Esophagus muscularis mucosa (tissue), 4 donors: ENCODE measurements at regions of chr11 and their contacts with region 1.

Region 1: DNA sequence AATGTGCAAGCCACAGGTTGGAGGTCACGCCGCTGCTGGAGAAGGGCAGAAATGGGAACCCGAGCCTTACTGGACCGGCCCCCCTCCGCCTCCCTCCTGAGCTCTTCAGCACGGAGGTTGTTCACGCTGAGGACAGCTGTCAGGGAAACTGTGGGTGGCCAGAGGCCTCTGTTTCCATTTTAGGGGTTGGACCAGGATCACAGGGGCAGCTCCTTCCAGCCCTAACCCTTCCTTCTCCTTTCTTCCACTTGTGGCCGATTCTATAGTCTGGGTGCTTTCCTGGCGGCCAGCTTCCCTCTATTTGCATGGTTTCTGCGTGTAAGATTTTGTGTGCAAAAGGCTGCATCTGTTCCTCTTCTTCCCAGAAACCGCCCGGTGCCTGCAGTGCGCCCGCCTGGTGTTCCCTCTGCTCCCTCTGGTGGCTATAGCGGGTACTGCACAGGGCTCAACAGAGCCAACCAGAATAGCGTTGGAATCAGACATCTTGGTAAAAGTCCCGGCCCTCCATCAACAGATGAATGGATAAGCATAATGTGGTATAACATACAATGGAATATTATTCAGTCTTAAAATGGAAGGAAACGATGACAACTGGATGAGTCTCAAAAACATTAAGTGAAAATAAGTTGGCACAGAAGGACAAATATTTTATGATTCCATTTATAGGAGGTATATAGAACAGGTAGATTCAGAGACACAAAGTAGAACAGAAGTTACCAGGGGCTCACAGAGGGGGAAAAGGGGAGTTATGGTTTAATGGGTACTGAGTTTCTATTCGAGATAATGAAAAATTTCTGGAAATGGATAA is 8.4 kb upstream of the SLC22A8 start:
- DNase-seq: peak; percentile 96
- H3K4me3 ChIP-seq: peak overlapping the region in 2 of 4 donors; percentile 0 to 11
- H3K27ac ChIP-seq: peak overlapping the region in 1 of 4 donors; percentile 11
- H3K4me1 ChIP-seq: peaks cover 4 to 9% (median 7%) of the 10 kb centered on the region in 4 donors
- H3K27me3 ChIP-seq: no peaks in the 10 kb centered on the region
- CTCF ChIP-seq: peak; percentile 100
- EP300 ChIP-seq: no peak
- POLR2A ChIP-seq: no peak

Region 2: GRCh38 chr11:62905927-62906531 is 118.0 kb before region 1 on chr11:
- intact Hi-C with region 1: loop called (anchors 1 kb)
- DNase-seq: peak; percentile 94
- H3K4me3 ChIP-seq: no peak overlapping the region
- H3K27ac ChIP-seq: peak overlapping the region in 1 of 4 donors; percentile 66
- H3K4me1 ChIP-seq: peaks cover 12 to 31% (median 25%) of the 10 kb centered on the region in 4 donors
- H3K27me3 ChIP-seq: no peaks in the 10 kb centered on the region
- CTCF ChIP-seq: peak in 2 of 3 experiments; percentile 97
- EP300 ChIP-seq: no peak
- POLR2A ChIP-seq: no peak